ENCODE measurements at regions of chr5 and their contacts with region 1.

Region 1: DNA sequence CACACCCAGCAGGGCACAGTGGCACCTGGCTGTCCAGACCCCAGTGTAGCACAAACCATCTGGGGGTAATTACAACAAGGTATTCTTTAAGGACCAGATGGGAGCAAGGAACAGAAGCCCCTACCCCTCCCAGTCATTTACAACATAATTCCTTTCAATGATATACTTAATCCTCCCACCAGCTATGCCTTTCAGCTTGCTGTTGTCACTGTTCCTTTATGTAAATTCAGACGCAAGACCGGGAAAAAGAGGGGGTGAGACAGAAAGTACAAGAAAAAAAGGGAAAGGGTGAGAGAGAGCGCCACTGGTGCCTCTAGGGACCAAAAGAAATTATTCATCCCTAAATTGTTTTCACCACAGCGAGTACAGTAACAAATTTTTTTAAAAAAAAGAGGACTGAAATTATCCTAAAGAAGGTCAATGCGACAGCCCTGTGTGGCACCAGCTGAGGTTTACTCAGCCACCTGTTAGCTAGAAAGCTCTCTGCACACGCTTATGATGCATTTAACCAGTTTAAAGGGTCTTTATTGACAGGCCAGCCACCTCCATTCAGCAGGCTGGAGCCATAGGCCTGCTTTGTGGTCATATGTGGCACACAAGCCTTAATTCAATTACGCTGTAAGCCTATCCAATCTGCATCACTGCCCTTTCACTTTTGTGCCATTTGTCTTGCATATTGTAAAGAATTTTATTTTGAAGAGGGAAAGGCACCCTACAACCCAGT is 210.2 kb upstream of the ISL1 start:
- DNase-seq: peak in 1 of 2 experiments; percentile 49
- H3K4me3 ChIP-seq: peak overlapping the region in 1 of 4 experiments; percentile 45; a peak in 2 of 8 replicates
- H3K27ac ChIP-seq: no peak overlapping the region; the same call in 1 of the 2 replicates
- H3K4me1 ChIP-seq: peaks cover 0 to 12% (median 8%) of the 10 kb centered on the region in 4 experiments; a peak in 5 of 7 replicates
- H3K27me3 ChIP-seq: no peaks in the 10 kb centered on the region
- CTCF ChIP-seq: peak in 1 of 3 experiments; percentile 3; a peak in 1 of 4 replicates
- EP300 ChIP-seq: no peak
- POLR2A ChIP-seq: no peak
- RAD21 ChIP-seq: no peak

Region 2: DNA sequence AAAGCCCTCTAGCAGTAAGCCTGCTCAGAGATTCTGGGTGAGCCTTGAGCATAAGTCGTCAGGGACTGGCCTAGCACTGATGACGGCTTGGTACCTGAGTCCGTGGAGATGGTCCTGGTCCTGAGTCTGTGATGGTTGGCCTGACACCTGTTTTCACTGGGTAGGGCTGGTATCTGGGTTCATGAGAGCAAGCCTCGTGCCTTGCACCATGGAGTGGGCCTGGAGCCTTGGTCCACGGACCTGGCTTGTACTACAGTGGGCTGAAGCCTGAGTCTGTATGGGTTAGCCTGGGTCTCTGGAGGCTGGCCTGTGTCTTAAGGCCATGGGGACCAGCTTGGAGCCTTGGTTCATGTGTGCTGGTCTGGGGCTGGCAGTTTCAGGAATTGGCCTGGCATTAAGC is 100.1 kb before region 1 on chr5:
- CTCF ChIA-PET with region 1: no interaction called
- POLR2A ChIA-PET with region 1: no interaction called
- DNase-seq: no peak
- H3K4me3 ChIP-seq: no peak overlapping the region
- H3K27ac ChIP-seq: no peak overlapping the region
- H3K4me1 ChIP-seq: no peaks in the 10 kb centered on the region
- H3K27me3 ChIP-seq: no peaks in the 10 kb centered on the region
- CTCF ChIP-seq: no peak
- EP300 ChIP-seq: no peak
- POLR2A ChIP-seq: no peak
- RAD21 ChIP-seq: no peak

Region 3: DNA sequence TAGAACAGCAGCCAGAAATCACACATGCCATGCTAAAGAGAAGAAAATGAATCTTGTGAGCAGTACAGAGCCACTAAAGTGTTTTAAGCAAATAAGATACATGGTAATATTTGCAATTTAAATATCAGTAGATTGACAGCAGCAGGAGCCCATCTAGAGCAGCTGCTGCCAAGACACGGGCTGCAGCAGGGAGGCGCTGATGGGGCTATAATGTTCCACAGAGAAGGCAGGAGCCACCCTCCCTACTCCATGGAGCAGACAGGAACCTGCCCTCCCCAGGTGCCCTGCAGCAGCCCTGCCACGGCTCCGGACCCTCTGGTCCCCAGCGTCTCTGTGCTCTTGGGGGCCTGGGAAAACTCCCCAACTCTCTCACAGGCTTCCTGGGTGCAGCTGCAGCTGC is 13.9 kb before region 1 on chr5:
- CTCF ChIA-PET with region 1: interaction called, 10 read pairs
- POLR2A ChIA-PET with region 1: no interaction called
- DNase-seq: peak in 1 of 2 experiments; percentile 48
- H3K4me3 ChIP-seq: no peak overlapping the region
- H3K27ac ChIP-seq: no peak overlapping the region
- H3K4me1 ChIP-seq: peaks cover 0 to 2% (median 0%) of the 10 kb centered on the region in 4 experiments; a peak in 2 of 7 replicates
- H3K27me3 ChIP-seq: no peaks in the 10 kb centered on the region
- CTCF ChIP-seq: peak; percentile 41 to 55 (median 52)
- EP300 ChIP-seq: no peak
- POLR2A ChIP-seq: no peak
- RAD21 ChIP-seq: peak; percentile 55 to 70

Measured in H1 (cell line).